Naive thymus-derived CD4-positive, alpha-beta T cell (primary cell): ENCODE measurements at regions of chr14 and their contacts with region 1.

Region 1: DNA sequence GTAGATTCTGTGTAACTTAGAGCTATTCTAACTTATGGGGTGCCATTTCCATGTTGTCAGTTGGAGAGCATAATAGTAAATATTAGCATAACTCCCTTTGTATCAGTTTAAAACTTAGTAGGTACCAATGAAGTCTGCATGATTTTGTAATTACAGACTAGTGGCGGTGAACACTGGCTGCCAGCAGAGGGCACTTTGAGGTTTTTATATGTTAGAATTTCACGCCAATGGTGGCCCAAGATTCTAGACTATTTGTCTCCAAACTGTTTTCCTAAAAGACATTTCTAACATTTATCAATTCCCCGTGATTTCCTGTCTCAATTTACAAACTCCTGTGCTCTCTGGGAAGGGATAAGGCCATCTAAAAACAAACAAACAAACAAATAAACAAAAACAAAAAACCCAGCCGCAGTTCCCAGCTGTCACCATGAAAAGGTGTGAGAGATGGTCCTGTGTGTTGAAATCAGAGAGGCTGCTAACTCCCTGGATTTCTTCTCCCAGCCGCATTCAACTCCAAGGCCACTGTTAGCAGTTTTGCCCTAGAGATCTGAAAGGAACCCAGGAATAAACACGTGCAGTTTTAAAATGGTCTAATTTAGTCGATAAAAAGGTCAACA is 57.6 kb downstream of the BRMS1L start:
- DNase-seq: peak in 5 of 9 donors; percentile 14 to 32 (median 23)
- ATAC-seq: no peak
- H3K4me3 ChIP-seq: no peak overlapping the region
- H3K4me3 Mint-ChIP-seq: no peak overlapping the region
- H3K27ac ChIP-seq: no peak overlapping the region
- H3K27ac Mint-ChIP-seq: no peak overlapping the region
- H3K4me1 ChIP-seq: no peaks in the 10 kb centered on the region
- H3K4me1 Mint-ChIP-seq: no peaks in the 10 kb centered on the region
- H3K27me3 ChIP-seq: no peaks in the 10 kb centered on the region
- H3K27me3 Mint-ChIP-seq: peaks cover 1 to 10% (median 9%) of the 10 kb centered on the region in 5 donors

Region 2: DNA sequence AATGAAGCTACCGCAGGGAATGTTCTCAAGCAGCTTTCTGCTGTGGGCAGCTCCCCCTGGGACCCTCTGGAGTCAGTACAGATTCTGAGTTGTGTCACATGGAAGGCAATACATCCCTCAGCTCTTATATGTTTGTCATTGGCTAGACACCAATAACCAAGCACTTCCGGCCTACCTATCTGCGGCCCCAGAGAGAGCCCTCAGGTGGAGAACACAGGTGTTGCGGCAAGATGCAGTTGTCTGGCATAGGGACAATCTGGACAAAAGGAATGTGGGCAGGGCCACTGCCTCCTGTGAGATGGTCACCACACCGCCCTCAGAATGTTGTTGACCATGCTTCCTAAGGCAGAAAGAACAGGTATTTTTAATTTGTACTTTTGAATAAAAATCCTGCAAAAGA is 61.1 kb after region 1 on chr14:
- CTCF ChIA-PET with region 1: interaction called, 8 read pairs
- POLR2A ChIA-PET with region 1: no interaction called
- intact Hi-C with region 1: loop called (anchors 1 to 2 kb)
- DNase-seq: peak in 3 of 9 donors; percentile 6 to 15 (median 11)
- ATAC-seq: no peak
- H3K4me3 ChIP-seq: no peak overlapping the region
- H3K4me3 Mint-ChIP-seq: no peak overlapping the region
- H3K27ac ChIP-seq: no peak overlapping the region
- H3K27ac Mint-ChIP-seq: peak overlapping the region in 1 of 9 donors; percentile 30
- H3K4me1 ChIP-seq: no peaks in the 10 kb centered on the region
- H3K4me1 Mint-ChIP-seq: peaks cover 0 to 10% (median 0%) of the 10 kb centered on the region in 7 donors
- H3K27me3 ChIP-seq: no peaks in the 10 kb centered on the region
- H3K27me3 Mint-ChIP-seq: peaks cover 0 to 3% (median 0%) of the 10 kb centered on the region in 5 donors

Region 3: GRCh38 chr14:36028218-36028617 is 144.4 kb after region 1 on chr14:
- CTCF ChIA-PET with region 1: no interaction called
- POLR2A ChIA-PET with region 1: no interaction called
- intact Hi-C with region 1: loop called in 1 of 2 experiments (anchors 2 kb)
- DNase-seq: no peak
- ATAC-seq: no peak
- H3K4me3 ChIP-seq: no peak overlapping the region
- H3K4me3 Mint-ChIP-seq: no peak overlapping the region
- H3K27ac ChIP-seq: no peak overlapping the region
- H3K27ac Mint-ChIP-seq: no peak overlapping the region
- H3K4me1 ChIP-seq: no peaks in the 10 kb centered on the region
- H3K4me1 Mint-ChIP-seq: no peaks in the 10 kb centered on the region
- H3K27me3 ChIP-seq: no peaks in the 10 kb centered on the region
- H3K27me3 Mint-ChIP-seq: peaks cover 9 to 24% (median 17%) of the 10 kb centered on the region in 5 donors

Region 4: GRCh38 chr14:36373982-36374673 is 490.3 kb after region 1 on chr14:
- CTCF ChIA-PET with region 1: interaction called, 11 read pairs
- POLR2A ChIA-PET with region 1: no interaction called
- intact Hi-C with region 1: loop called (anchors 1 kb)
- DNase-seq: peak; percentile 33 to 66 (median 57)
- ATAC-seq: peak; percentile 92
- H3K4me3 ChIP-seq: no peak overlapping the region
- H3K4me3 Mint-ChIP-seq: no peak overlapping the region
- H3K27ac ChIP-seq: no peak overlapping the region
- H3K27ac Mint-ChIP-seq: no peak overlapping the region
- H3K4me1 ChIP-seq: no peaks in the 10 kb centered on the region
- H3K4me1 Mint-ChIP-seq: peaks cover 0 to 3% (median 0%) of the 10 kb centered on the region in 7 donors
- H3K27me3 ChIP-seq: no peaks in the 10 kb centered on the region
- H3K27me3 Mint-ChIP-seq: peaks cover 0 to 7% (median 2%) of the 10 kb centered on the region in 5 donors

Region 5: DNA sequence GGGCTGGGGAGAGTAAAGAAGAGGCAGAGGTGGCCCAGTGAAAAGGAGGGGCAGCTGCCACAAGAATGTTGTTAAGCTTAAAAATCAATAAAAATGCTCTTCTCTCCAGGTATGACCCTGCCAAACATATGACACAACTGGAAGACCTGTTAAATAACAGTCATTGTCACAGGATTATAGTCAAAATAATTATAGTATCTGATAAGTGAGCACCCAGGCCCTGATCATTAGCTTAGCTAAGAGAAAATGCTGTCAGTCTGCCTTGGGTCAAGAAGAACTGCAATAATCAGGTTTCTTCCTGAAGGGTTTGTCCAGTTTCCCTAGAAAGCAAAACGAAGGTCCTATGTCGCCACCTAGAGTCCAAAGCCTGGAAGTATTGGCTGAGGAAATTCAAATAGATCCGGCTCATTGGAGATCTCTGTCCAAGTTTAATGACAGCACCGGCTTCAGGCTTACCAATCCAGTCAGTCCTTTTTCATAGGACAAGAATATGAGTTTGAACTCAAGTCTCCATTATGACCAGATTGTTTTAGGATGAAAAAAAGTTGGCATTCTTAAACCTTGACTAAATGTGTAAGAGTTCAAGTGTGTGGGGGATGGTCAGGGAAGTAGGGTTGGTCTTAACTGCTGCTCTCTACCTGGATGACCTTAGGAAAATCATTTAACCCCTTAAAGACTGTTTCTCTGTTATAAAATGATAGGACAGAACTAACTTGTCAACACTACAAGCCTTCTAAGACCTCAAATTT is 721.1 kb after region 1 on chr14:
- CTCF ChIA-PET with region 1: no interaction called
- POLR2A ChIA-PET with region 1: no interaction called
- intact Hi-C with region 1: loop called in 1 of 2 experiments (anchors 5 kb)
- DNase-seq: peak in 6 of 9 donors; percentile 2 to 23 (median 5)
- ATAC-seq: no peak
- H3K4me3 ChIP-seq: no peak overlapping the region
- H3K4me3 Mint-ChIP-seq: no peak overlapping the region
- H3K27ac ChIP-seq: no peak overlapping the region
- H3K27ac Mint-ChIP-seq: no peak overlapping the region
- H3K4me1 ChIP-seq: no peaks in the 10 kb centered on the region
- H3K4me1 Mint-ChIP-seq: no peaks in the 10 kb centered on the region
- H3K27me3 ChIP-seq: no peaks in the 10 kb centered on the region
- H3K27me3 Mint-ChIP-seq: peaks cover 5 to 21% (median 14%) of the 10 kb centered on the region in 5 donors